ENCODE measurements at regions of chr14 and their contacts with region 1.

Region 1: DNA sequence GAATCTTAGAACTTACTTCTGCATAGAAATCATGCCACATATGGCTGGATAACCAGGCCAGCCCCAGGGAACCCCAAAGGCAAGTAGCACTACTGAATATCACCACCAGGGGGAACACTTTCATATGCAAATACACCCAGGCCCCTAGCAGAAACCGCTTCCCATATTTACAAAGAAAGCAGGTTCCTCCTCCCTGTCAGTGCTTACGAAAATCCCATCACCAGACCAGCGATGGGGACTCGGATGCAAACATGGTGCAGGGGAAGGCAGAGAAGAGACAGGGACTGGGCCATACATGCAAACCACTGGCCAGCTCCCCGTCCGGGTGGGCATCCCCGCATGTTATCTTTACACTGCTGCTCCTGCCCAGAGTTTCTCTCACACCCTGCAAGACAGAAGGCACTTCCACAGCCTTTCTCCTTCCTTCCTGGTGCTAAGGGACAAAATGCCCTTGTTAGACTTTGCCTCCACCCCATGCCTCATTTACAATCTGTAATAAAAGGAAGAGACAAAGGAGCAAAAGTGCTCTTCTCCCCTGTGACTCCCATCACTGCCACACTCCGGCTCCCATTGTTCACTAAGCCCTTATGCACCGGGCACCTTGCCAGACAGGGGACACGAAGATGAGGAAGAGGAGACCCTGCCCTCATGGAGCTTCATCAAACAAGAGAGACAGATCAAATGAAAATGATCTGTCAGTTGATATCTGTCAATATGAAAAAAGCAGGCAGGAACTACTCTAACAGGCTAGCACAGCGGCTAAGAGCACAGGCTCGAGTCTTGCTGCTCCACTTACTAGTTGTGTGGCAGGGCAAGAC is 62.3 kb downstream of the PTPN21 start:
- DNase-seq: peak; percentile 90
- H3K4me3 ChIP-seq: no peak overlapping the region
- H3K27ac ChIP-seq: peak overlapping the region; percentile 26
- H3K4me1 ChIP-seq: no peaks in the 10 kb centered on the region
- H3K27me3 ChIP-seq: no peaks in the 10 kb centered on the region
- CTCF ChIP-seq: peak; percentile 84

Region 2: GRCh38 chr14:88554457-88555286 is 62.2 kb after region 1 on chr14 and contains the start of gene PTPN21:
- intact Hi-C with region 1: loop called (anchors 5 kb)
- DNase-seq: peak; percentile 79
- H3K4me3 ChIP-seq: peak within 1 kb of the TSS; percentile 64
- H3K27ac ChIP-seq: peak within 1 kb of the TSS; percentile 76
- H3K4me1 ChIP-seq: no peaks in the 10 kb centered on the region
- H3K27me3 ChIP-seq: no peaks in the 10 kb centered on the region
- CTCF ChIP-seq: no peak
- total RNA-seq, gene PTPN21: 22.2 to 23.6 TPM

Measured in colonic mucosa (tissue), 4 donors.